ENCODE measurements at regions of chr6 and their contacts with region 1.

Region 1: DNA sequence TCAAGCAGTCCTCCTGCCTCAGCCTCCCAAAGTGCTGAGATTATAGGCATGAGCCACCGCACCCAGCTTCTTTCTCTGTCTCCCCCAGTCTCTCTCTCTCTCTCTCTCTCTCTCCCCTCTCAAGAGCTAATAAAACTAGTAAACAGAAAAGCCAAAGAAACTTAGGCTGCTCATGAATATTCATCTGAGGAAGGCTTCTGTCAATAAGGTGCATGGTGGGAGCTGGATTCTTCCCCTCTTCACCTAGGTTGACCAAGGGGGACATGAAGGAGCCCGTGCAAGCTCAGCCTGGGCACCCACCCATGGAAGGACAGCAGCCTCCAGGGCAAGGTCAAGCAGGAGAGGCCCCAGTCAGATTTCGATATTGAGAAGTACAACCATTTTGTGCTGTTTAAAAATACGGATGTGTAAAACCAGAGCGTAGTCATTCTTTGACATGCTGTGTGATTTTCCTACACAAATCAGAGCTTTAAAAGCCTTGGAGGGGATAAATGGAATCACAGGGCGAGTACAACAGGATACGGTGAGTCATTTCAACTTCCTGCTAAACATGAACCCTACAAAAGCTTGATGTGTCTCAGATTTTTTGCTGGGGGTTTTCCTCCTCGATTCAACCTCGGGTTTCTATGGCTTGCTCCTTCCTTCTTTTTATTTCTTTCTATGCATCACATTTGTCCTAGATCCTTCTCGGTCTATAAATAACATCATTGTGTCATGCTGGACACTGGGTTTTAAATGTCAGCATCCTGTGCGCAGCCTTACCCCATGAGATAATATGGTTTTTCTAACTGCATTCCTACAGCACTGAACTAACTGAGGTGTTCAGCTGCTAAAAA is 368.9 kb upstream of the JARID2 start:
- DNase-seq: peak; percentile 59
- H3K4me3 Mint-ChIP-seq: peak overlapping the region; percentile 40
- H3K27ac Mint-ChIP-seq: peak overlapping the region; percentile 97
- H3K4me1 Mint-ChIP-seq: peaks cover 74% of the 10 kb centered on the region
- H3K27me3 Mint-ChIP-seq: no peaks in the 10 kb centered on the region

Region 2: GRCh38 chr6:14423330-14423729 is 453.7 kb before region 1 on chr6:
- CTCF ChIA-PET with region 1: no interaction called
- POLR2A ChIA-PET with region 1: no interaction called
- intact Hi-C with region 1: loop called (anchors 1 kb)
- DNase-seq: no peak
- H3K4me3 Mint-ChIP-seq: no peak overlapping the region
- H3K27ac Mint-ChIP-seq: peak overlapping the region; percentile 73
- H3K4me1 Mint-ChIP-seq: peaks cover 46% of the 10 kb centered on the region
- H3K27me3 Mint-ChIP-seq: no peaks in the 10 kb centered on the region

Region 3: DNA sequence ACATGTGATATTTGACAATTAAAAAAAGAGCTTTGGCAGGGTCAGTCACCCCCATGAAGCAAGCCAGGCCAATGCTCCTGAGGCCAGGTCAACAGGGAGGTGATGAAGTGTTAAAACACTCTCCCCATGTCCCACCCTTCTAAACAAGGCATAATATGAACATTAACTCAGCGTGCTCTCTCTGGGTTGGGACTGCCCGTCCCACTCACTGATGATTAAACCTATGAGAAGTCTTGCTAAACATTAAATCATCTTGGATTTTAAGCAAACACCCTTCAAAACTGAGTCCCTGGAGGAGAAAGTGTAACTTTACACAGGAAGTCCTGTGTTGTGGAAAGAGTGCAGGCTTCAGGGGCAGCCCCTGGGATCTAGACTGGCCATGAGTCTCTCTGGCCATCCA is 200.9 kb before region 1 on chr6:
- CTCF ChIA-PET with region 1: no interaction called
- POLR2A ChIA-PET with region 1: no interaction called
- intact Hi-C with region 1: loop called (anchors 2 kb)
- DNase-seq: peak; percentile 35
- H3K4me3 Mint-ChIP-seq: no peak overlapping the region
- H3K27ac Mint-ChIP-seq: peak overlapping the region; percentile 80
- H3K4me1 Mint-ChIP-seq: peaks cover 43% of the 10 kb centered on the region
- H3K27me3 Mint-ChIP-seq: no peaks in the 10 kb centered on the region

Region 4: GRCh38 chr6:14754751-14755513 is 122.1 kb before region 1 on chr6:
- CTCF ChIA-PET with region 1: interaction called, 3 read pairs
- POLR2A ChIA-PET with region 1: interaction called, 73 read pairs
- intact Hi-C with region 1: loop called (anchors 1 kb)
- DNase-seq: peak; percentile 90
- H3K4me3 Mint-ChIP-seq: peak overlapping the region; percentile 61
- H3K27ac Mint-ChIP-seq: peak overlapping the region; percentile 100
- H3K4me1 Mint-ChIP-seq: peaks cover 73% of the 10 kb centered on the region
- H3K27me3 Mint-ChIP-seq: no peaks in the 10 kb centered on the region

Region 5: GRCh38 chr6:15023448-15023847 is 146.5 kb after region 1 on chr6:
- CTCF ChIA-PET with region 1: no interaction called
- POLR2A ChIA-PET with region 1: interaction called, 11 read pairs
- intact Hi-C with region 1: loop called (anchors 1 kb)
- DNase-seq: peak; percentile 89
- H3K4me3 Mint-ChIP-seq: peak overlapping the region; percentile 41
- H3K27ac Mint-ChIP-seq: peak overlapping the region; percentile 96
- H3K4me1 Mint-ChIP-seq: peaks cover 35% of the 10 kb centered on the region
- H3K27me3 Mint-ChIP-seq: peaks cover 3% of the 10 kb centered on the region

Region 6: GRCh38 chr6:15218401-15218800 is 341.4 kb after region 1 on chr6:
- CTCF ChIA-PET with region 1: no interaction called
- POLR2A ChIA-PET with region 1: no interaction called
- intact Hi-C with region 1: no loop called
- DNase-seq: no peak
- H3K4me3 Mint-ChIP-seq: no peak overlapping the region
- H3K27ac Mint-ChIP-seq: no peak overlapping the region
- H3K4me1 Mint-ChIP-seq: peaks cover 3% of the 10 kb centered on the region
- H3K27me3 Mint-ChIP-seq: no peaks in the 10 kb centered on the region

Region 7: GRCh38 chr6:15299430-15300131 is 422.6 kb after region 1 on chr6:
- CTCF ChIA-PET with region 1: no interaction called
- POLR2A ChIA-PET with region 1: no interaction called
- intact Hi-C with region 1: loop called (anchors 5 kb)
- DNase-seq: peak; percentile 46
- H3K4me3 Mint-ChIP-seq: no peak overlapping the region
- H3K27ac Mint-ChIP-seq: peak overlapping the region; percentile 50
- H3K4me1 Mint-ChIP-seq: peaks cover 79% of the 10 kb centered on the region
- H3K27me3 Mint-ChIP-seq: no peaks in the 10 kb centered on the region